ENCODE measurements at regions of chr12 and their contacts with region 1.

Region 1: GRCh38 chr12:116093915-116094314 is 183.6 kb downstream of the MED13L start:
- DNase-seq: no peak
- H3K4me3 ChIP-seq: no peak overlapping the region
- H3K27ac ChIP-seq: no peak overlapping the region
- H3K4me1 ChIP-seq: no peaks in the 10 kb centered on the region
- H3K27me3 ChIP-seq: no peaks in the 10 kb centered on the region
- CTCF ChIP-seq: no peak
- POLR2A ChIP-seq: no peak

Region 2: DNA sequence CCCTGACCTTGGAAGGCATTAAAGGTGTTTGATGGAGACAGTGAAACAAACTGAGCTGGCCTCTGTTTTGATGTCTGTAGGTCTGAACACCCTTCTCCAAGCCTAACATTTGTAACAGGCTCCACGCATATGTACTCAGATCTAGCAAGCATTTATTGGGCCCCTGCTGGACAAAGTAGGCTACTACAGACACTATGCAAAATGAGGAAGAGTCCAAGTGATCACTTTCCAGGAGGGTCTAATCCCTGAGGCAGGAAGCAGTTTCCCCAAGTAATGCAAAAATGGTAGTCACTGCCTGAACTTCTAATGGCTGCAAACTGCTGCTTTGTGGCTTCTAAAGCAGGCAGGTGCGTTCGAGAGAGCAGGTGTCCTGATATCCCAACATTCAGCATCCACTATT is 222.2 kb before region 1 on chr12:
- CTCF ChIA-PET with region 1: no interaction called
- POLR2A ChIA-PET with region 1: no interaction called
- dilution Hi-C with region 1: no loop called
- intact Hi-C with region 1: no loop called
- DNase-seq: no peak
- H3K4me3 ChIP-seq: no peak overlapping the region
- H3K27ac ChIP-seq: no peak overlapping the region
- H3K4me1 ChIP-seq: no peaks in the 10 kb centered on the region
- H3K27me3 ChIP-seq: no peaks in the 10 kb centered on the region
- CTCF ChIP-seq: peak; percentile 34 to 35
- POLR2A ChIP-seq: no peak

Region 3: GRCh38 chr12:116104167-116104767 is 10.4 kb after region 1 on chr12:
- CTCF ChIA-PET with region 1: no interaction called
- POLR2A ChIA-PET with region 1: no interaction called
- dilution Hi-C with region 1: no loop called
- intact Hi-C with region 1: loop called (anchors 2 kb)
- DNase-seq: no peak
- H3K4me3 ChIP-seq: no peak overlapping the region
- H3K27ac ChIP-seq: no peak overlapping the region
- H3K4me1 ChIP-seq: peaks cover 8% of the 10 kb centered on the region
- H3K27me3 ChIP-seq: no peaks in the 10 kb centered on the region
- CTCF ChIP-seq: no peak
- POLR2A ChIP-seq: no peak

Region 4: GRCh38 chr12:116389990-116390389 is 296.1 kb after region 1 on chr12:
- CTCF ChIA-PET with region 1: no interaction called
- POLR2A ChIA-PET with region 1: no interaction called
- dilution Hi-C with region 1: no loop called
- intact Hi-C with region 1: no loop called
- DNase-seq: peak; percentile 95
- H3K4me3 ChIP-seq: no peak overlapping the region
- H3K27ac ChIP-seq: no peak overlapping the region
- H3K4me1 ChIP-seq: peaks cover 10% of the 10 kb centered on the region
- H3K27me3 ChIP-seq: no peaks in the 10 kb centered on the region
- CTCF ChIP-seq: no peak
- POLR2A ChIP-seq: peak; percentile 27